ENCODE measurements at regions of chr5 and their contacts with region 1.

Region 1: DNA sequence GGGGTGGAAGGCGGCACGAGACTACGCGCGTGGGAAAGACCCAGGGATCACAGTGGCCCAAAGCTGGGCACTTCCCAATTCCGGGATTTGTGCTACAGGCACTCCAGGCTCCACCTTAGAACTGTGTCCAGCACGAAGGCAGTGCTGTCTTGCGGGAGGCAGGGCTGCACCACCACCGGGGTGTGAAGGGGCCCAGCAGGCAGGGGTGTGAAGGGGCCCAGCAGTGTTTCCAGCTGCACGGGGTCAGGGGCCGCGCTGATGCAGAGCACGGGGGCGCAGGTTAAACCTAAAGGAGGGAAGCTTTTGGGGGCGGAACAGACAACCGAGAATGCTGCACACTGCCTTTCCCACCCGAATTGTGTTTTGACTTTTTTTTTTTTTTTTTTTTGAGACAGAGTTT is 1.1 kb upstream of the PDCD6 start:
- DNase-seq: no peak
- ATAC-seq: no peak
- H3K4me3 ChIP-seq: no peak overlapping the region
- H3K4me3 Mint-ChIP-seq: peak overlapping the region; percentile 93
- H3K27ac ChIP-seq: no peak overlapping the region
- H3K27ac Mint-ChIP-seq: peak overlapping the region; percentile 87 to 89
- H3K4me1 ChIP-seq: peaks cover 20% of the 10 kb centered on the region
- H3K4me1 Mint-ChIP-seq: peaks cover 28 to 44% of the 10 kb centered on the region in 2 donors
- H3K27me3 ChIP-seq: no peaks in the 10 kb centered on the region
- H3K27me3 Mint-ChIP-seq: no peaks in the 10 kb centered on the region
- CTCF ChIP-seq: no peak

Region 2: GRCh38 chr5:217860-218456 is 52.4 kb before region 1 on chr5 and contains the starts of genes CCDC127 and SDHA:
- intact Hi-C with region 1: loop called (anchors 2 kb)
- DNase-seq: peak; percentile 97 to 100
- ATAC-seq: peak; percentile 77 to 90 (median 85)
- H3K4me3 ChIP-seq: peak within 1 kb of the TSS; percentile 98
- H3K4me3 Mint-ChIP-seq: peak within 1 kb of the TSS; percentile 95
- H3K27ac ChIP-seq: peak within 1 kb of the TSS; percentile 83
- H3K27ac Mint-ChIP-seq: peak within 1 kb of the TSS; percentile 95 to 96
- H3K4me1 ChIP-seq: peaks cover 13% of the 10 kb centered on the region
- H3K4me1 Mint-ChIP-seq: peaks cover 52 to 56% of the 10 kb centered on the region in 2 donors
- H3K27me3 ChIP-seq: no peaks in the 10 kb centered on the region
- H3K27me3 Mint-ChIP-seq: no peaks in the 10 kb centered on the region
- CTCF ChIP-seq: peak; percentile 26
- total RNA-seq, gene CCDC127: 4.4 to 6.2 (median 5.4) TPM
- total RNA-seq, gene SDHA: 173 to 183 (median 173) TPM

Region 3: GRCh38 chr5:565782-566440 is 295.6 kb after region 1 on chr5:
- intact Hi-C with region 1: no loop called
- DNase-seq: no peak
- ATAC-seq: no peak
- H3K4me3 ChIP-seq: no peak overlapping the region
- H3K4me3 Mint-ChIP-seq: no peak overlapping the region
- H3K27ac ChIP-seq: no peak overlapping the region
- H3K27ac Mint-ChIP-seq: no peak overlapping the region
- H3K4me1 ChIP-seq: no peaks in the 10 kb centered on the region
- H3K4me1 Mint-ChIP-seq: no peaks in the 10 kb centered on the region
- H3K27me3 ChIP-seq: no peaks in the 10 kb centered on the region
- H3K27me3 Mint-ChIP-seq: peaks cover 9 to 18% of the 10 kb centered on the region in 2 donors
- CTCF ChIP-seq: no peak